ENCODE measurements at regions of chr2 and their contacts with region 1.

Region 1: GRCh38 chr2:216412022-216412999 is at the start of gene SMARCAL1:
- DNase-seq: peak; percentile 99
- H3K4me3 ChIP-seq: peak within 1 kb of the TSS; percentile 30 to 65 (median 55)
- H3K27ac ChIP-seq: peak within 1 kb of the TSS; percentile 97 to 99 (median 98)
- H3K4me1 ChIP-seq: peaks cover 0 to 13% of the 10 kb centered on the region in 2 donors
- H3K27me3 ChIP-seq: no peaks in the 10 kb centered on the region
- CTCF ChIP-seq: peak in 1 of 6 experiments; percentile 9
- POLR2A ChIP-seq: peak in 1 of 2 donors; percentile 54
- total RNA-seq, gene SMARCAL1: 19.5 to 31.4 (median 24.6) TPM

Region 2: DNA sequence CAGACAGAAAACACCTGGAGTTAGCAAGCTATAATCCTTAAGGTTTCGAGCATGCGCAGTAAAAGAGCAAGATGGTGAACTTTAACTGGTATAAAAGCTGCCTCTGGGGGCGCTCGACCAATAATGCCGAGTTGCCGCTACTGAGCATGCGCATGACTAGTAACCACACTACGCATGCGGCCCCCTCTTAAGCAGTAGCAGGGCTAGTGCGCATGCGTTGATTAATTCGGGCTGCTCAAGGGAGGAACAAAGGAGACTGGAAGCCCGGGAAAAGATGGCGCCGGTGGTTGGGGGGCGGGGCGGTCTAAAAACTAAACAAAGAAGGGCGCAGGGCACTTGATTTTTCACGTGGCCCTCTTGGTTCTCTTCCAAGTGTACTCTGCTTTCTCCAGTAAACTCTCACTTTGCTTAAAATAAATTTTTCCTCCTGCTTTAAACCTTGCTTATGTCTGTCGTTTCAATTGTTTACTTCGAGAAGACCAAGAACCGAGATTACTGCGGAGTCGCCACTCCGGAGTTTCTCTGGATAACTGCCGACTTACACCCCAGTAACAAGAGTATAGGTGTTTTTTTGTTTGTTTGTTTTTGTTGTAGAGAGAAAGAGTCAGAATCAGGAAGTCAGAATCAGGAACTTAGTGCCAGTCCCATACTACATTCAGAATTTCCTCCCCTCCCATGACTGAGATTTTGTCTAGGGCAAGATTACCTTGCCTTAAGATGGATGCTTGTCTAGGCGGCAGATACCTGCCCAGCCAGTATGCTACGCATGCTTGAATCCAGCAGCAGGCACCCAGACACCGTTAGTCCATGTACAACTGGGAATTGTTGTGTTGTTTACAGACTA is 297.4 kb before region 1 on chr2:
- intact Hi-C with region 1: loop called (anchors 5 kb)
- DNase-seq: peak; percentile 98 to 99
- H3K4me3 ChIP-seq: peak overlapping the region in 2 of 3 donors; percentile 19 to 61
- H3K27ac ChIP-seq: peak overlapping the region; percentile 75 to 89 (median 88)
- H3K4me1 ChIP-seq: peaks cover 28 to 33% of the 10 kb centered on the region in 2 donors
- H3K27me3 ChIP-seq: no peaks in the 10 kb centered on the region
- CTCF ChIP-seq: peak; percentile 49 to 98 (median 89)
- POLR2A ChIP-seq: peak in 1 of 2 donors; percentile 74

Region 3: DNA sequence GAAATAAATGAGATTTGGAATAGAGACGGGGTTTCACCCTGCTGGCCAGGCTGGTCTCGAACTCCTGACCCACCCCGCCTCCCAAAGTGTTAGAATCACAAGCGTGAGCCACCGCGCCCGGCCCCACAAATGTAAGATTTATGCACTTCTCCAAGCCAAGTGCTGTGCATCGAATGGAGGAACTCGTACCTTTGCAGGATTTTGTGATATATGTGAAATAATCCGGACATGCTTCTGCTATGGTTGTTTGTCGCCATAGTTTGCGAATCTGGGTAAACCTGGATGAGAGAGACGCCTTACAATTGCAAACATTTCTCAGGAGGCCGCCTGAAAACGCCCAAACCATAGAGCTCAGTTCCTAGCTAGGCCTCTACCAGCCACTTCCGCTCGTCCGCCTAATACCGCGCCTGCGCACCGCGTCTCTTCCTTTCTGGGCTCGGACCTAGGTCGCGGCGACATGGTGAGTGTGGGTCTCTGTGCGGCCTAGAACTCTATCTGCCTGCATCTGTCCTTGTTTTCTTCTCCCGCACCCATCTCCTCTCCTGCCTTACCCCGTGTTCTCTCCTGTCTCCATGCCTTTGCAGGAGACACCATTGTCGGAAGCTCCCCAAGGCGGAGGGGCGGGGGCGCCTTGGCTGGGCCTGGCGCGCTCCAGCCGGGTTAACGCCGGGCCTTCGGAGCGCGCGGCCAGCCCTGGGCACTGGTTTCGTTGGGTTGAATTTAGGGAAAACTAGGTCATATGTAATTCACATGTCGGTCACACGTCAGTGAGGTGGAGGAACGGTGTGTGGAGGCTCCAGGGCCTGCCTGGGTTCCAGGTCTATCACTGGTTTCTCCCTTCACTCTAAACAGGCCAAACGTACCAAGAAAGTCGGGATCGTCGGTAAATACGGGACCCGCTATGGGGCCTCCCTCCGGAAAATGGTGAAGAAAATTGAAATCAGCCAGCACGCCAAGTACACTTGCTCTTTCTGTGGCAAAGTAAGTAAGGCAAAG is 86.4 kb after region 1 on chr2 and contains the start of gene RPL37A:
- intact Hi-C with region 1: loop called (anchors 10 kb)
- DNase-seq: peak; percentile 92 to 94
- H3K4me3 ChIP-seq: peak within 1 kb of the TSS; percentile 25 to 92 (median 51)
- H3K27ac ChIP-seq: peak within 1 kb of the TSS; percentile 77 to 96 (median 82)
- H3K4me1 ChIP-seq: peaks cover 21 to 22% of the 10 kb centered on the region in 2 donors
- H3K27me3 ChIP-seq: no peaks in the 10 kb centered on the region
- CTCF ChIP-seq: peak in 1 of 6 experiments; percentile 12
- POLR2A ChIP-seq: peak; percentile 18 to 92
- total RNA-seq, gene RPL37A: 393 to 1,147 (median 736) TPM

Region 4: DNA sequence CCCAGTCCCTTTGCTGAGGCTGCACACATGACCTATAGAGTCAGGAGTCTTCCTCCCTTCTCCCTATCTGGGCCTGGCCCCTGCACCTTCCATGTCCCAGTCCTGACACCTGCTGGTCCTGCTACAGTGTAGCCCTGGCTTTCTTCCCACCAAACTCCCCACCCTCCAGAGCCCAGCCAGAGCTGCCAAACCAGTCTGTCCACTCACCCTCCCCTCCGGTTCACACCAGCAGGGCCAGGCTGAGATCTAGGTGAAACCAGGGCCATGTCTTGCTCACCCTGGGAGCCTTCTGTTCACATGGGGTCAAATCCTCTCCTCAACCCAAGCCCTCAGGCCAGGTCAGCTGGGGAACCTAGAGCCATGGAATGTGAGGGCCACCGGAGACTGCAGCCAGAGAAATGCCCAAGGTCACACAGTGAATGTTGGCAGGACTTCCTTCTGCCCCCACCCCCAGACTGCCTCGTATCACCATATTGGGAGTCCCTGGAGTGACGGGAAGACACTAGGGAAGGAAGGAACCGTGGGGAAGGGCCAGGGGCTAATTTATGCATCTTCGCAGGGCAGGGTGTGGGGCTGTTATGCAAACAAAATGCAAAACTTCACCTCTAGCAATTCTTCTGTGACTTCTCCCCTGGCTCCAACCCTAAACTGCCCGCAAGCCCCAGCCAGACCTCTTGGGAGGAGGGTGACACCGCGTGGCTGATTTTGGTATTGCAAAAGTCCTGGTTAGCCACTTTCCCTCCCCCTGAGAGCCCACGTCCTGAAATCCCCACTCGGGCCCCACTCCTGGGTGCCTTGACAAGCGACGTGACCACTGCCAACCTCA is 1575.9 kb after region 1 on chr2:
- intact Hi-C with region 1: no loop called
- DNase-seq: peak; percentile 97
- H3K4me3 ChIP-seq: no peak overlapping the region
- H3K27ac ChIP-seq: peak overlapping the region; percentile 86 to 94 (median 86)
- H3K4me1 ChIP-seq: peaks cover 19 to 39% of the 10 kb centered on the region in 2 donors
- H3K27me3 ChIP-seq: no peaks in the 10 kb centered on the region
- CTCF ChIP-seq: peak; percentile 86 to 98 (median 93)
- POLR2A ChIP-seq: peak in 1 of 2 donors; percentile 41